Psoas muscle (tissue), 8 donors: ENCODE measurements at regions of chr16 and their contacts with region 1.

Region 1: DNA sequence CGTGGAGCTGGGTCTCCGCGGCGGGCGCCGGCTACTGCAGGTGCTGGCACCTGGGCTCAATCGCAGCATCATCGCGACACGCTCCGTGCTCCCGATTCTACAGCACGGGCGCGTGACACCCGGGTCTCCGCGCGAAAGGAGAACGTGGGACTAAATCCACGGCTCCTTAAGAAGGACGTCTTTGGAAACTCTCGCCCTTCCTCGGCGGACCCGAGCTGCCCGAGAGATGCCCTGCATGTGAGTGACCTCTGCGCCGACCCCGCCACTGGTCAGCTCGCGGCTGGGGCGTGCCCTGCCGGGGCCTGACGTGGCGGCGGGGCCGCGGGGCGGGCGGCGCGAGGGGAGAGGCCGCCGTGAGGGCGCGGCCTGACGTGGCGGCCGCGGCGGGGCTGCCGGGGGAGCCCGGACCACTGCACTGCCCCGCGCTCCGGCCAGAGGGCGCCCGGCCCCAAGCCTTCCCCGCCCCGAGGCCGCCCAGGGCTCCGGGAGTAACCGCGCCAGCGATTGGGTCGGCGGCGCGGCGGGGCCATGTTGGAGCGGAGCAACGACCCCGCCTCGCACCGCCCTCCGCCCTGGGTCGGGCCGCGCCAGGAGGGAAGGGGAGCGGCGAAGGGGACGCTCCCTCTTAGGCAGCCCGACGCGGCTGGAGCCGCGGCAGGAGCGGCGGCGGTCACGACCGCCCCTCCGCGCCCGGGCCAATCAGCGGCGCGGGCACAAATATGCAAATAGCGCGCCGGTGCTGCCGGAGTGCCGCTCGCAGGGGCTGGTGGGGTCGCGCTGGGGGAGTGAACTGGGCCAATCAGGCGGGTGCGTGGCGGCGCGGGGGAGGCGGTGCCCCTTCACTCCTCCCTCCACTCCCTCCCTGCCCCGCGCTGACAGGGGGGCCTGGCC is 75.6 kb downstream of the CHD9 start:
- DNase-seq: peak; percentile 98 to 99
- ATAC-seq: peak; percentile 90 to 94 (median 92)
- H3K4me3 ChIP-seq: peak overlapping the region; percentile 95
- H3K27ac ChIP-seq: peak overlapping the region; percentile 94
- H3K4me1 ChIP-seq: peaks cover 28% of the 10 kb centered on the region
- H3K27me3 ChIP-seq: no peaks in the 10 kb centered on the region
- CTCF ChIP-seq: peak; percentile 81

Region 2: DNA sequence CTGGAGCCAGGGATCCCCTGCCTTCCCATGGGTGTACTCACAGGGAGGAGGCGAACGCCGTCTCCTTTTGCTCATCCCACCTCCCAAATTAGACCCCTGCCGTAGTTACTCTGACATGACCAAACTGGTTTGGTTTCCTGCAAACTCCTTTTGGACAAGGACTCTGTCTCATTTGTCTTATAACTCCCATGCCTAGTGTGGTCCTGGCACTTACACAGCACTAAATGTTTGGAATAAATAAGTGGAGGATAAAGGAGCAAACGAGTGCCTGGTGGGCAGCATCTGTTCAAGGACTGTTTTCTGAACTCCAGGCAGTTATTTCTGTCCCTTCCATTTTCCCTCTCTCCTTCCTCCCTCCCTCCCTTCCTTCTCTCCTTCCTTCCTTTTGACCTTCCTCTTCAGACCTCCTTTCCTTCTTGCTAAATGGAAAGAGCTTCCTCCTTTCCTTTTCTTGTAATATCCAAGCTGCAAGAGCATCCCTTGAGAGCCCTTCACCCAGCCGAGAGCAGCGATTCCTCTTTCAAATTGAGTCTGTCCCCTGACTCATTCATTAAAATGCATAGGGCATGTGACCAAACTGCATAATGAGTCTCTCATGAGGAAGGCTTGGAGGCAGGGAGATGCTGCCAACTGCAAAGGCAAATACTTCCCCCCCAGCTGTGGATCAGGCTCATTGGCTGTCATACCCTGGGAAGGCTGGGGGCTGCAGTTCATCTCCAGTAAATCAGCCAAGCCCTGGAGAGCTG is 38.8 kb before region 1 on chr16:
- intact Hi-C with region 1: loop called in 1 of 2 experiments (anchors 5 kb)
- DNase-seq: peak; percentile 69 to 87
- ATAC-seq: peak; percentile 6 to 28 (median 16)
- H3K4me3 ChIP-seq: peak overlapping the region; percentile 26
- H3K27ac ChIP-seq: peak overlapping the region; percentile 80
- H3K4me1 ChIP-seq: peaks cover 51% of the 10 kb centered on the region
- H3K27me3 ChIP-seq: no peaks in the 10 kb centered on the region
- CTCF ChIP-seq: no peak

Region 3: DNA sequence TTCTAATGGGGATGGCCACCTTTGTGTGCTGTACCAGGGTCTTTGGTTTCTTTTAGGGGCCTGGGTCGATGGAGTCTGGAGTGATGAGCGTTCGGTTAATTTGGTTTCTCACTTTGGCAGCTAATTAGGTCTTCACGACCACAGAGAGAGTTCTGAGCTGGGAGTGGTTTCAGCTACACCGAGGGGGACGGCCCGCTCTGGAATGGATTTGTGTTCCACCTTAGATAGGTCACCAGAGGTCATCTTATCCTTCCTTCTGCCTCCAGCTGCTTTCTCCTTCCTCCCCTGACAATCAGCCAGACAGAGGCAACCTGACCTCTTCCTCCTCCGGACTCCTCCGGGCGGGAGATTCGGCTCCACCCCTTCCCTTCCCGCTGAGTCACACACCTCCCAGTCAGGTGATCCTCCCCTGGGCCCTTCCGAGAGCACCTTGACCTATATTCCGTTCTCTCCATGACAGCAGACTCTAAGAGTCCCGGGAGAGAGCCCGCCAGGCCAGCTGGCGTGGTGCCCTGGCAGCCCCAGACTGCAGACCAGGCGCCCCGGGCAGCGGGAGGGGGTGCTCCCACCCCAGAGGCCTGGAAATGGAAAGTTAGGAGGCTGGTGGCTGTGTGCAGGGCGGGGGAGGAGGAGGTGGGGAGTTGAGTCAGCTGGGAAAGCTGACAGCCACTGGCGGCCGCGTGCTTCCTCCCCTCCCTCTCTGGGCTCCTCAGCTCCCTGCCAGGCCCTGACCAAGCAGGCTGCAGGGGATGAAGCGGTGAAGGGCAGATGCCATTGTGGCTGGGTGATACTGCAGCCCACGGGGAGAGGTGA is 30.9 kb before region 1 on chr16:
- intact Hi-C with region 1: loop called (anchors 2 to 5 kb)
- DNase-seq: peak; percentile 94 to 95
- ATAC-seq: peak; percentile 88 to 94 (median 90)
- H3K4me3 ChIP-seq: peak overlapping the region; percentile 67
- H3K27ac ChIP-seq: peak overlapping the region; percentile 89
- H3K4me1 ChIP-seq: peaks cover 31% of the 10 kb centered on the region
- H3K27me3 ChIP-seq: no peaks in the 10 kb centered on the region
- CTCF ChIP-seq: no peak

Region 4: DNA sequence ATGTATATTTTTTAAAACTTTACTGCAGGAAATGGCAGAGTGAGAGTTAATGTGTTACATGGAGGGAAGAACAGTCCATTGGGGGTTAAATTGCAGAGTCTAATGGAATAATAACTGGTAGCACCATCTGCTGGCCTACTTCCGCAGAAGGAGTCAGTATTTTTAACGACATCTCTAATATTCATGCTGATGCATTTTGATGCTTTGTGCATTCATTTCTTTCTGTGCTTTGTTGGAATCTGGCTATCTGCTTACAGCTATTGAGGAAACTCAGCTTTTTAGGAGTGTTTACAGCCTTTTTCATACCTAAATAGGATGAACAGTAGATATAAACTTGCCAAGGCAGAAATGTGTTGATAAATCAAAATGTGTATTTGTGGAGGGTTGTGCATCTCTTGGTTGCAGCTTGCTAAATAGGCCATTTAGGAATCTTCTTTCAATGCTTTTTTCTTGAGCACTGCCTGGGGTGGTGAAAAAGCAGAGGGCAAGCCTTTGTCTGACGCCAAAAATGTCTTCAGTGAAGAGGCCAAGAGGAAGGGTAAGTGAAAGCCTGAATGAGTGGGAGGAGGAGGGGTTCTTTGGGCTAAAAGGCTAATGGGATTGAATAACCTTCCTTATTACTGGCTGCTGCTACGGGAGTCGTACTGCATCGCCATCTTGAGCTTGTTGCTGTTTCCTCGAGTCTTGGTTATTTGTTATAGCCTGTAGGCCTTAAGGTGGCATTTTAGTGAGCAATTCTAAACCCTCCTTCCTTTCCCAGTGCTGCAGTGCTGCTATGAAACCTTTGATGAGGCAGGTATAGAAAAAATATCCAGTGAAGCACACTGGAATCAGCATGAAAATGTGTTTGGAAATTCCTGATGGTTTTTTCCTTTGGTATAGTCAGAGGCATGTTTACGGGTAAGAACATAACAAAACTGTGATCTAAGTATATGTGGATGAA is 77.7 kb after region 1 on chr16:
- intact Hi-C with region 1: loop called (anchors 2 to 5 kb)
- DNase-seq: no peak
- ATAC-seq: peak; percentile 84 to 89 (median 86)
- H3K4me3 ChIP-seq: peak overlapping the region; percentile 69
- H3K27ac ChIP-seq: peak overlapping the region; percentile 86
- H3K4me1 ChIP-seq: peaks cover 61% of the 10 kb centered on the region
- H3K27me3 ChIP-seq: no peaks in the 10 kb centered on the region
- CTCF ChIP-seq: peak; percentile 52

Region 5: GRCh38 chr16:53449632-53450517 is 319.5 kb after region 1 on chr16:
- intact Hi-C with region 1: no loop called
- DNase-seq: no peak
- ATAC-seq: no peak
- H3K4me3 ChIP-seq: no peak overlapping the region
- H3K27ac ChIP-seq: no peak overlapping the region
- H3K4me1 ChIP-seq: no peaks in the 10 kb centered on the region
- H3K27me3 ChIP-seq: no peaks in the 10 kb centered on the region
- CTCF ChIP-seq: no peak